ENCODE measurements at regions of chr6 and their contacts with region 1.

Region 1: GRCh38 chr6:132483779-132484679 is 28.9 kb downstream of the STX7 start:
- DNase-seq: peak; percentile 43
- H3K4me3 ChIP-seq: no peak overlapping the region
- H3K27ac ChIP-seq: no peak overlapping the region
- H3K4me1 ChIP-seq: no peaks in the 10 kb centered on the region
- H3K27me3 ChIP-seq: no peaks in the 10 kb centered on the region
- CTCF ChIP-seq: peak; percentile 58 to 84 (median 74)
- POLR2A ChIP-seq: no peak

Region 2: DNA sequence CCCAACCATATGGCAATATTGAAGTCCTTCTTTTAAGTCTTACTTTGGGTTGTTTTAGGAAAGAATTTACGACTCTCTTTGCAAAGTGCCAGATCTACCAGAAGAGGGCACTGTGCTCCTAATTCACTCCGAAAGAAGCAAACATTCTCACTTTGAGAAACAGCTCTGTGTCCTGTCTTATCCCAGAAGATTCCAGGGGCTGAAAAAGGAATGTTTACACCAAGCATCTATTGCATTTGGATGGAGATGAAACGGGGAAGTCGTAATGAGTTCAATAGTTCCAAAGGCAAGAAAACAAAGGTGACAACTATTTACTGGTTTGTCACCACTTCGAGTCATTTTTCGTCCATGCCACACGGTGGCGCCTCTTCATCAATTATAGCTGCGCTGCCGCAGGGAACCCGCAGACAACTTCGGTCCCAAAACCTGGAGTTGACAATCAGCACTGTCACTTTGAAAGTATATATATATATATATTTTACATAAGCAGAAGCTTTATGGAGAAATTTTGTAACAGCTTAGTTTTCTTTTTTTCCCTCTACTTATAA is 204.4 kb before region 1 on chr6:
- intact Hi-C with region 1: loop called (anchors 2 kb)
- DNase-seq: peak; percentile 62
- H3K4me3 ChIP-seq: peak overlapping the region in 1 of 2 donors; percentile 21
- H3K27ac ChIP-seq: no peak overlapping the region
- H3K4me1 ChIP-seq: no peaks in the 10 kb centered on the region
- H3K27me3 ChIP-seq: no peaks in the 10 kb centered on the region
- CTCF ChIP-seq: peak; percentile 50 to 92 (median 87)
- POLR2A ChIP-seq: no peak

Region 3: GRCh38 chr6:132300323-132300949 is 183.6 kb before region 1 on chr6:
- intact Hi-C with region 1: loop called (anchors 2 kb)
- DNase-seq: no peak
- H3K4me3 ChIP-seq: no peak overlapping the region
- H3K27ac ChIP-seq: no peak overlapping the region
- H3K4me1 ChIP-seq: no peaks in the 10 kb centered on the region
- H3K27me3 ChIP-seq: no peaks in the 10 kb centered on the region
- CTCF ChIP-seq: peak; percentile 9 to 55 (median 32)
- POLR2A ChIP-seq: no peak

Region 4: DNA sequence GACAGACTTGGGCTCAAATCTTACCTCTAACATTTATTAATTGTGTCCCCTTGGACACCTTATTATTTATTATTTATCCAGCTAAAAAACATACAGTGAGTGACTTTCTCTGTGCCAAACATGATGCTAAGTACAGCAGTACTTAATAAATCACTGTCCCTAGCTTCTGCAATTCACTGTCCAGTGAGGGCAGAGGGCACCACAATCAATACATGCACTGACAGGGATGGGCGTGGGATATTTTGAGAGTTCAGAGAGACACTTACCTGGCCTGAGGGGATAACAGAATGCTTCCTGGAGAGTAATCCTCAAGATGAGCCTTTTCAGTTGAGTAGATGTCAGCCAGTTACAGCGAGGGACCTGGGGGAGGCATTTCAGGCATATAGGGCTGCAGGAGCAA is 149.3 kb after region 1 on chr6:
- intact Hi-C with region 1: no loop called
- DNase-seq: no peak
- H3K4me3 ChIP-seq: no peak overlapping the region
- H3K27ac ChIP-seq: no peak overlapping the region
- H3K4me1 ChIP-seq: no peaks in the 10 kb centered on the region
- H3K27me3 ChIP-seq: no peaks in the 10 kb centered on the region
- CTCF ChIP-seq: no peak
- POLR2A ChIP-seq: no peak

Measured in prostate gland (tissue), 2 donors.